BJ (cell line): ENCODE measurements at regions of chr4 and their contacts with region 1.

Region 1: GRCh38 chr4:185915271-185915670 is 103.3 kb upstream of the SORBS2 start:
- DNase-seq: no peak
- H3K4me3 ChIP-seq: no peak overlapping the region
- H3K27me3 ChIP-seq: no peaks in the 10 kb centered on the region
- CTCF ChIP-seq: no peak

Region 2: DNA sequence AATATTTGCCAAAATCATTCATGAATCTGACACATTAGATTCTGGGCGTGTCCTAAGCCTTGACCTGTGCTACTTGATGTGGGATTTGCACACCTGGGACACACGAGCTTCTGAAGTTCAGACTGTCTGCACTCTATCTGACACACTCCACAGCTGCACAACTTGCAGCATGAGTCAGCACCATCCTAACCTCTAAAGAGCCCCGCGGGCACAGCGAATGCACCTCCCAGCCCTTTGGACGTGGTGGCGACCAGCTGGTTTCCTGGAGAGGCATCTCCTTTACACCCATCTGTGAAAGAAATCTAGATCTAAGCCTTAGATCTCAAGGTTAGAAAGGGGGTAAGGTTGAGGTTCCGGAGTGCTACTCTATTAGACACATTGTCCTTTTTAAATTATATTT is 172.5 kb before region 1 on chr4:
- CTCF ChIA-PET with region 1: no interaction called
- POLR2A ChIA-PET with region 1: interaction called, 37 read pairs
- DNase-seq: no peak
- H3K4me3 ChIP-seq: no peak overlapping the region
- H3K27me3 ChIP-seq: peaks cover 2% of the 10 kb centered on the region; the same call in 1 of the 2 replicates
- CTCF ChIP-seq: no peak